ENCODE measurements at regions of chr9 and their contacts with region 1.

Region 1: DNA sequence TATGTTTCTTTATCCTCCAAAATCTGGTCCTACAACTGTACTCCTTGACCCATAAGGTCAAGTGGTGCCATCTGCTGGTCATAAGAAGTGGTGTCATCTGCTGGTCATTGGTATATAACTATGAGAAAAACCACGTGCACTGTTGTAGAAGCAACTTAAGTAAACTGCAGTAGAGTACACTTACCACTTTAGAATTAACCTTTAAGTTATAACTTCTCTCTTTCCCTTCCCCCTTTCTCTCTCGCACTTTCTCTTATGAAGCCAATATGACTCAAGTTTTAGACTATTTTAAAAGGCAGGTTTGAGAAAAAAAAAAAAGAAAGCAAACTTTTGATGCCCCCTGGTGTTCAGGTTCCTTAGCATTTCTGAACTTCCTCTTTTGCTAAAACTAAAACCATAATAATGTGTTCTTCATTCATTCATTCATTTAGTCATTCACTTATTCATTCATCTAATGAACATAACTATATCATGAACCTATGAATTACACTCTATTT is 12.8 kb upstream of the MTAP start:
- DNase-seq: peak; percentile 86
- ATAC-seq: peak; percentile 97
- H3K4me3 ChIP-seq: peak overlapping the region; percentile 15 to 54 (median 46)
- H3K4me3 Mint-ChIP-seq: peak overlapping the region; percentile 77
- H3K27ac ChIP-seq: no peak overlapping the region
- H3K27ac Mint-ChIP-seq: peak overlapping the region; percentile 17
- H3K4me1 ChIP-seq: no peaks in the 10 kb centered on the region
- H3K4me1 Mint-ChIP-seq: peaks cover 3% of the 10 kb centered on the region
- H3K27me3 ChIP-seq: peaks cover 0 to 14% (median 6%) of the 10 kb centered on the region in 4 experiments
- H3K27me3 Mint-ChIP-seq: peaks cover 22% of the 10 kb centered on the region
- CTCF ChIP-seq: peak; percentile 99

Region 2: GRCh38 chr9:21239911-21240310 is 549.7 kb before region 1 on chr9 and contains the start of gene IFNA14:
- CTCF ChIA-PET with region 1: interaction called, 11 read pairs
- POLR2A ChIA-PET with region 1: no interaction called
- intact Hi-C with region 1: loop called (anchors 1 kb)
- DNase-seq: no peak
- ATAC-seq: no peak
- H3K4me3 ChIP-seq: no peak within 1 kb of the TSS
- H3K4me3 Mint-ChIP-seq: no peak within 1 kb of the TSS
- H3K27ac ChIP-seq: no peak within 1 kb of the TSS
- H3K27ac Mint-ChIP-seq: no peak within 1 kb of the TSS
- H3K4me1 ChIP-seq: no peaks in the 10 kb centered on the region
- H3K4me1 Mint-ChIP-seq: peaks cover 6% of the 10 kb centered on the region
- H3K27me3 ChIP-seq: peaks cover 0 to 5% (median 0%) of the 10 kb centered on the region in 4 experiments
- H3K27me3 Mint-ChIP-seq: peaks cover 31% of the 10 kb centered on the region
- CTCF ChIP-seq: no peak
- total RNA-seq, gene IFNA14: not detected in 2 replicates

Region 3: GRCh38 chr9:21317956-21318923 is 471.3 kb before region 1 on chr9:
- CTCF ChIA-PET with region 1: interaction called, 24 read pairs
- POLR2A ChIA-PET with region 1: no interaction called
- intact Hi-C with region 1: loop called (anchors 1 kb)
- DNase-seq: peak; percentile 48
- ATAC-seq: peak; percentile 64
- H3K4me3 ChIP-seq: no peak overlapping the region
- H3K4me3 Mint-ChIP-seq: no peak overlapping the region
- H3K27ac ChIP-seq: no peak overlapping the region
- H3K27ac Mint-ChIP-seq: no peak overlapping the region
- H3K4me1 ChIP-seq: no peaks in the 10 kb centered on the region
- H3K4me1 Mint-ChIP-seq: peaks cover 4% of the 10 kb centered on the region
- H3K27me3 ChIP-seq: no peaks in the 10 kb centered on the region
- H3K27me3 Mint-ChIP-seq: peaks cover 9% of the 10 kb centered on the region
- CTCF ChIP-seq: peak; percentile 83

Region 4: DNA sequence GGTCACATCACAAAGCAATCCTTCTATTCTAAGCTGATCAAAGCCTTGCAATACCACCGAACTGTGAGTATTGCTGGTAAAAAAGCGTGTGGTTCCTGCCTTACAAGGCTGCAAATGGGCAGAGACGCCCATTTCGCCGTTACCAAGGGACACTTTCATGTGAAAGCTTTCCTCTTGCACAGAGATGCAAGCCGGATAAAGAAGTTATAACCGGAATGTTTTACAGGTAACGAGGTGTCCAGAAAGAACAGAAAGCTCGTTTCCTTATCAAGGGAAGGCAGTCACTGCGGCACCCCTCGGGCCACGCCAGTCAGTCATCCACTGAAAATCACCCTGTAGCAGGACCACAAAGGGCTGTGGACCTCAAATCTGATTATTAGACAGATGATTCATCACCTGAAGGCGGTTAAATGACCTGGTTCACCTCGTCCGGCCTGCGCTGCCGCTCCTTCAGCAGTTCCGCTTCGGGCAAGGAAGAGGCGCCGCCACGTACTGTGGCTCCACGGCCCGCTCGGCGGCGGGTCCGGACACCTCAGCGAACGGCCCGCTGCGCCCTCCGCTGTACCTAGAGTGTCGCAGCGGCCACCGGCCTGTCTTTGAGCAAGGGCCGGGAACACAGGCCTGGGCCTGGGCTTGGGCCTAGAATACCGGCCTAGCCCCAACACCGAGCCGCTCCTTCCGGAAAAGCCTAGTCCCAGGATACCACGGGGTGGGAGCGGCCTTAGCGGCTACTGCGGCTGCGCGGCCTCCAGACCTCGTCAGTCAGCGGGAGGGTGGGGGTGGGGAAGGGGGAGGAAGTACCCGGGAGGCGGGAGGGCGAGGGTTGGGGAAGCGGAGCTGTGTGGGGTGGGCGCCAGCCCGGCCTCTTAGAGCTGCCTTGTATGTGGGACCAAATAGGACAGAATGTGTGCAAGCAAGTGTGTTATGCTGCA is 454.6 kb before region 1 on chr9 and contains the start of gene KLHL9:
- CTCF ChIA-PET with region 1: interaction called, 11 read pairs
- POLR2A ChIA-PET with region 1: no interaction called
- intact Hi-C with region 1: no loop called
- DNase-seq: peak; percentile 93
- ATAC-seq: peak; percentile 89
- H3K4me3 ChIP-seq: peak within 1 kb of the TSS; percentile 83 to 97 (median 89)
- H3K4me3 Mint-ChIP-seq: peak within 1 kb of the TSS; percentile 95
- H3K27ac ChIP-seq: peak within 1 kb of the TSS; percentile 90
- H3K27ac Mint-ChIP-seq: peak within 1 kb of the TSS; percentile 92
- H3K4me1 ChIP-seq: peaks cover 18 to 27% of the 10 kb centered on the region in 2 donors
- H3K4me1 Mint-ChIP-seq: peaks cover 49% of the 10 kb centered on the region
- H3K27me3 ChIP-seq: peaks cover 0 to 6% (median under 1%) of the 10 kb centered on the region in 4 experiments
- H3K27me3 Mint-ChIP-seq: peaks cover 12% of the 10 kb centered on the region
- CTCF ChIP-seq: no peak
- total RNA-seq, gene KLHL9: 17.5 and 17.6 TPM in 2 replicates

Region 5: GRCh38 chr9:21709464-21710058 is 80.0 kb before region 1 on chr9:
- CTCF ChIA-PET with region 1: interaction called, 5 read pairs
- POLR2A ChIA-PET with region 1: no interaction called
- intact Hi-C with region 1: loop called (anchors 1 kb)
- DNase-seq: peak; percentile 56
- ATAC-seq: peak; percentile 60
- H3K4me3 ChIP-seq: no peak overlapping the region
- H3K4me3 Mint-ChIP-seq: no peak overlapping the region
- H3K27ac ChIP-seq: no peak overlapping the region
- H3K27ac Mint-ChIP-seq: no peak overlapping the region
- H3K4me1 ChIP-seq: no peaks in the 10 kb centered on the region
- H3K4me1 Mint-ChIP-seq: no peaks in the 10 kb centered on the region
- H3K27me3 ChIP-seq: peaks cover 0 to 3% (median 0%) of the 10 kb centered on the region in 4 experiments
- H3K27me3 Mint-ChIP-seq: peaks cover 29% of the 10 kb centered on the region
- CTCF ChIP-seq: peak; percentile 94

Region 6: GRCh38 chr9:21802195-21803000 is 12.8 kb after region 1 on chr9 and contains the start of gene MTAP:
- CTCF ChIA-PET with region 1: interaction called, 7 read pairs
- POLR2A ChIA-PET with region 1: no interaction called
- intact Hi-C with region 1: loop called (anchors 1 kb)
- DNase-seq: peak; percentile 80
- ATAC-seq: peak; percentile 88
- H3K4me3 ChIP-seq: peak within 1 kb of the TSS; percentile 68 to 94 (median 84)
- H3K4me3 Mint-ChIP-seq: peak within 1 kb of the TSS; percentile 99
- H3K27ac ChIP-seq: peak within 1 kb of the TSS; percentile 24 to 71
- H3K27ac Mint-ChIP-seq: peak within 1 kb of the TSS; percentile 83
- H3K4me1 ChIP-seq: peaks cover 24 to 25% of the 10 kb centered on the region in 2 donors
- H3K4me1 Mint-ChIP-seq: peaks cover 48% of the 10 kb centered on the region
- H3K27me3 ChIP-seq: peaks cover 0 to 9% (median 2%) of the 10 kb centered on the region in 4 experiments
- H3K27me3 Mint-ChIP-seq: peaks cover 13% of the 10 kb centered on the region
- CTCF ChIP-seq: no peak
- total RNA-seq, gene MTAP: 28.8 and 38.4 TPM in 2 replicates